ENCODE measurements at regions of chr10 and their contacts with region 1.

Region 1: DNA sequence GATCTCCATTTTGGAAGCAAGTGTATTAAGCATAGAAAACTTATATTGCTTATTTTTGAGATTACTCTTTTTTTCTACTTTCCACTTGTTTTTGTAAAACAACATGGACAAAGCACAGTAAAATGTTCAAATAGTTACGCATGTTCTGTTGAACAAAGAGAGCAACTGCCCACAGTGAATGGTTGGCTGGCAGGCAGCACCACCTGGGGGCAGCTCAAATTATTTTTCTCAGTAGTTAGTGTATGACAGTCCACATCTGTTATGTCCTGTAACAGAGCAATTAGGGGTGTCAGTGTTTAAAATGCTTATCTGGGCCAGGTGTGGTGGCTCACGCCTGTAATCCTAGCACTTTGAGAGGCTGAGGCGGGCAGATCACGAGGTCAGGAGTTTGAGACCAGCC is 46.1 kb upstream of the CACUL1 start:
- DNase-seq: peak; percentile 24
- H3K4me3 ChIP-seq: no peak overlapping the region
- H3K27ac ChIP-seq: no peak overlapping the region
- H3K4me1 ChIP-seq: no peaks in the 10 kb centered on the region
- H3K27me3 ChIP-seq: no peaks in the 10 kb centered on the region
- CTCF ChIP-seq: peak in 3 of 4 experiments; percentile 38 to 60 (median 58)
- POLR2A ChIP-seq: no peak

Region 2: GRCh38 chr10:118720685-118721538 is 80.0 kb before region 1 on chr10:
- intact Hi-C with region 1: loop called (anchors 10 kb)
- DNase-seq: peak; percentile 57
- H3K4me3 ChIP-seq: no peak overlapping the region
- H3K27ac ChIP-seq: no peak overlapping the region
- H3K4me1 ChIP-seq: no peaks in the 10 kb centered on the region
- H3K27me3 ChIP-seq: no peaks in the 10 kb centered on the region
- CTCF ChIP-seq: peak; percentile 59 to 87 (median 82)
- POLR2A ChIP-seq: no peak

Region 3: GRCh38 chr10:119028900-119029612 is 228.1 kb after region 1 on chr10:
- intact Hi-C with region 1: loop called (anchors 5 kb)
- DNase-seq: peak; percentile 87
- H3K4me3 ChIP-seq: peak overlapping the region; percentile 46 to 55
- H3K27ac ChIP-seq: peak overlapping the region; percentile 53 to 57
- H3K4me1 ChIP-seq: peaks cover 6% of the 10 kb centered on the region
- H3K27me3 ChIP-seq: no peaks in the 10 kb centered on the region
- CTCF ChIP-seq: peak in 2 of 4 experiments; percentile 46 to 51
- POLR2A ChIP-seq: no peak

Measured in prostate gland (tissue), 2 donors.